ENCODE measurements at regions of chr3 and their contacts with region 1.

Region 1: GRCh38 chr3:135965506-135966270 is at the start of gene PPP2R3A:
- DNase-seq: peak; percentile 89 to 95
- ATAC-seq: peak; percentile 98
- H3K4me3 ChIP-seq: peak within 1 kb of the TSS; percentile 79 to 91
- H3K27ac ChIP-seq: peak within 1 kb of the TSS; percentile 73 to 91
- H3K4me1 ChIP-seq: peaks cover 6 to 7% of the 10 kb centered on the region in 2 donors
- H3K27me3 ChIP-seq: no peaks in the 10 kb centered on the region
- total RNA-seq, gene PPP2R3A: 15.6 to 19.6 TPM

Region 2: DNA sequence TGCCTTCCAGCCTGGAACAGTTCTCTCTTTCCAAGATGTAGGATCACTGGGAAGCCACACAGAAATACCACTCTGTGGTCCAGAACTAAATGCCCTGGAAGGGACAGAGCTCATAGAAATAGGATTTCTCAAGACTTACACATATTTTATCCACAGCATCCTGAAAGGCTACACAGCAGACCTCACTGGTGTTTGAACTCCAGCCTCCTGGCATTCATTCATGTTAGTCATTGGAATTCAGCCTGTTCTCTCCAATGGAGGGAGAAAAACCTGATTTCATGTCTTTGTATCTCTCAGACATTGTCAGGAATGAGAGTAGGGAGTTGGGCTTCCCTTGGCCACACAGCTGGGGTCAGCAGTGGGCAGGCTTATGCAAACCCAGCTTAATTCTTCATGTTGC is 121.3 kb before region 1 on chr3:
- intact Hi-C with region 1: no loop called
- DNase-seq: no peak
- ATAC-seq: no peak
- H3K4me3 ChIP-seq: no peak overlapping the region
- H3K27ac ChIP-seq: no peak overlapping the region
- H3K4me1 ChIP-seq: no peaks in the 10 kb centered on the region
- H3K27me3 ChIP-seq: no peaks in the 10 kb centered on the region

Region 3: DNA sequence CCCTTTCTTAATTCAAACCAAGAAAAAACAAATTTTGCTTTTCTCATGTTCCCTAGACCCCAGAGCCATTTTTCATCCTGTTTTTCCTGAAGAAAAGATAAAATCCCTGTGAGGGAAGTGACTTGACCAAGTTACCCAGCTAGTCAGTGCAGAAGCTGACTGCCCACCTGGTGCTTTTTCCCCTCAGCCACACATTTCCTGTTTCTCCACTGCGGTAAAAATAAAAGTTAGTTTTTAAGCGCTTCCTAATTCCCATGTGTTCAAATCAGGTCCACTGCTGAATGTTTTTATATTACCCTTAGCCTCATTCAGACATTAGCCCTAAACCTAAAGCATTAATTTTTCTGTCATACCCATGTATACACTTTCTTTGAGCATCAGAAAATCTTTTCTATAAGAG is 25.9 kb after region 1 on chr3:
- intact Hi-C with region 1: loop called (anchors 2 to 5 kb)
- DNase-seq: no peak
- ATAC-seq: no peak
- H3K4me3 ChIP-seq: no peak overlapping the region
- H3K27ac ChIP-seq: peak overlapping the region; percentile 90 to 95
- H3K4me1 ChIP-seq: peaks cover 3 to 7% of the 10 kb centered on the region in 2 donors
- H3K27me3 ChIP-seq: no peaks in the 10 kb centered on the region

Region 4: DNA sequence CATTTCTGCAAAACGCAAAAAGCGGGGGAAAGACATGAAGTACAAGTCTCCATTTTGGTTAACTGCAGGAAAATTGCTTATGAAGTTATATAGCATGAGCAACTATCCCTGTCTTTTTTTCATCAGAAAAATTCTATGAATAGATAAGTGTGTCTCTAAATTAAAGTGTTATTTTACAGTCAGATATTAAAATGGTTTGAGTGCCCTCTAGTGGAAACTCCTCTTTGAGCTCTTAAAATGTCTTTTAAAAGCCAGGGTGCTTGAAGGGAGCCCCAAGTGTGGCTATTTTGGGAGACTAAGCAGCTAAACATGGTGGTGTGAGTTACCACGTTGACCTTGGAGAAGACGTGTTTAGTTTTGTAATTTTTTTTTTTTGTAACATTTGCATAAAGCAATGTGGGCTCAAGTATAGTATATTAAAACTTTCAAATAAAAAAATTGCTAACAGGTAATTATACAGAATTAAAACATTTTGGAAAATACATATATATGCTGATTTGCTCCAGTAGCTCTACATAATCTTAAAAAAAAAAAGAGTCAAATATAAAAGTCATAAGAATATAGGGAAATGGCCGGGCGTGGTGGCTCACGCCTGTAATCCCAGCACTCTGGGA is 77.0 kb after region 1 on chr3:
- intact Hi-C with region 1: loop called in 1 of 2 experiments (anchors 5 kb)
- DNase-seq: no peak
- ATAC-seq: no peak
- H3K4me3 ChIP-seq: no peak overlapping the region
- H3K27ac ChIP-seq: no peak overlapping the region
- H3K4me1 ChIP-seq: no peaks in the 10 kb centered on the region
- H3K27me3 ChIP-seq: no peaks in the 10 kb centered on the region

Measured in aorta (tissue), 5 donors.